ENCODE measurements at regions of chr10 and their contacts with region 1.

Region 1: DNA sequence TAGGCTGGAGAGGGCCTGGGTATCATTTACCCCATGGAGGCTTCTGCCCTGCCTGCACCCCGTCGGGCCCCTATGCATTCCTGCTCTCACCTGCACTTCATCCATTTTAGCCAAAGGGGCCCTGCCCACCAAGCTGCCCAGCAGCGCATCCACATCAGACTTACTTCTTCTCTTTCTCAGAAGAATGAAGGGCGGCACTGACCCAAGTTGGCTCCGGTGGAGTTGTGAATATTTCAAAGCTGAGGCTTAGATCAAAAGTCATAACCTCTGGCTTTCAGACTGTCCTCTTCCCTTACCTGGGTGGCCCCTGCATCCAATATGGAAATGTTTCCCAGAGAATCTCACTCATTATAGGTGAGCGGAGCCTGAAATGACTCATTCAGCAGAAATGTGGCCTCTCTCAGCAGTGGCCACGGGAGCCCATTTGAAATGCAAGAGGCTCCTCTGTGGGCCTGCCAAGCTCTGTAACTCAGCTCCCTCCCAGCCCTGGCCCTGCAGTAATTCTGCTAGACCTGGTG is 117.6 kb upstream of the TCF7L2 start:
- DNase-seq: no peak
- ATAC-seq: no peak
- H3K4me3 ChIP-seq: no peak overlapping the region
- H3K27ac ChIP-seq: no peak overlapping the region
- H3K4me1 ChIP-seq: no peaks in the 10 kb centered on the region
- H3K27me3 ChIP-seq: no peaks in the 10 kb centered on the region

Region 2: DNA sequence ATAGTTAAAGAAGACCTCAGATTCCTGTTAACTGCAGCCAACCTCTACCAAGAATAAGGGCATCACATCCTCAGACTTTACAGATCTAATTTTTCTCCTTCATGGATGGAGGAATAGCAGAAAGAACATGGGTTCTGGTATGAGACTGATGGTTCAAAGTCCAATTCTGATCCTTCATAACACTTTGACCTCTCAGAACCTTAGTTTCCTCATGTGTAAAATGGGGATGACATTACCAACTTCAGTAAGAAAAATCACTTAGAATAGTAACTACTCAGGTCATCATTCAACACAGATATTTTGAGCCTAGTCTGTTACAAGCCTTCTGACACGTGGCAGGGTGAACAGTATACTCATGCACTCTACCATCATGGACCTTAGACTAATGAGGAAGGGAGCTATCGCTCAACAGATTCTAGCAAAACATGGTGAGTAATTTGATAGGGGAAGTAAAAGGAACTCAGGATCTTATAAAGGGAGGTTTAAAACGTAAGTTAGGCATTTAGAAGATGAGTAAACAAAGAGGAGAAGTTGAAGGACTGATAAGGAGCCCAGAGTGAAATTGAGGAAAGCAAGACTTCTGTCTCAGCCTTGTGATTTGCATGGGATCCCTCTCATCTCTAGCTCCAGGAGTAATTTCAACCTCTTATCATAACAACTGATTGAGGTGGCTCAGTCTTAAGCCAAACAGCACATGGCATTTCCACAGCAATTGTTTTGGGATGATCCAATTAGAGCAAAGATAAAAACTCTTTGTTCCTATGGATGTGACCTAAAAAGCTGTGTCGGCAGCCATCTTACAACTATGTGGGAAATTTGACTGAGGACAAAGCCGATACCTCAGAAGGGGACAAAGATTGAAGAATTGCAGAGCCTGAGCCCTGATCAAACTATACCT is 48.5 kb after region 1 on chr10:
- intact Hi-C with region 1: loop called in 1 of 2 experiments (anchors 10 kb)
- DNase-seq: no peak
- ATAC-seq: no peak
- H3K4me3 ChIP-seq: no peak overlapping the region
- H3K27ac ChIP-seq: no peak overlapping the region
- H3K4me1 ChIP-seq: no peaks in the 10 kb centered on the region
- H3K27me3 ChIP-seq: no peaks in the 10 kb centered on the region

Region 3: DNA sequence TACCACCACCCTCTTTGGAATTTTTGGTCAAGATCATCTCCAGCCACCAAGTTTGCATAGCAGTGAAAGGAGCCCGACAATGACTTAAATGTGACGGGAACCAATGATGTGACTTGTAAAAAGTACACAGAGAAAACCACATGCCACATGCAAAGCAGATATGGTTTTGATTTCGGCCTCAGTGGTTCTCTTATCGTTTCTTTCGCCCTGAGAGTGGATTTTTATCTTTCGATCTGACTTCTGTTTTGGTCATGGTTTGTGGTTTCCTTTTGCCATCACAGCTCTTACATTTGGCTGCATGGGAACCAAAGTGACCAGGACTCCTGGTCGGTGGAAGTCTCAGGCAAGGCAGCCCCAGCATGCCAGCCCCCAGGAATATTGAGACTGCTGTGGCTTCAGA is 149.1 kb after region 1 on chr10:
- intact Hi-C with region 1: no loop called
- DNase-seq: no peak
- ATAC-seq: no peak
- H3K4me3 ChIP-seq: no peak overlapping the region
- H3K27ac ChIP-seq: no peak overlapping the region
- H3K4me1 ChIP-seq: peaks cover 6 to 7% of the 10 kb centered on the region in 2 donors
- H3K27me3 ChIP-seq: no peaks in the 10 kb centered on the region